Right ventricle myocardium superior (tissue), 1 donor: ENCODE measurements at regions of chr11 and their contacts with region 1.

Region 1: GRCh38 chr11:78564490-78565467 is 9.9 kb downstream of the NARS2 start:
- DNase-seq: no peak
- ATAC-seq: peak; percentile 72

Region 2: DNA sequence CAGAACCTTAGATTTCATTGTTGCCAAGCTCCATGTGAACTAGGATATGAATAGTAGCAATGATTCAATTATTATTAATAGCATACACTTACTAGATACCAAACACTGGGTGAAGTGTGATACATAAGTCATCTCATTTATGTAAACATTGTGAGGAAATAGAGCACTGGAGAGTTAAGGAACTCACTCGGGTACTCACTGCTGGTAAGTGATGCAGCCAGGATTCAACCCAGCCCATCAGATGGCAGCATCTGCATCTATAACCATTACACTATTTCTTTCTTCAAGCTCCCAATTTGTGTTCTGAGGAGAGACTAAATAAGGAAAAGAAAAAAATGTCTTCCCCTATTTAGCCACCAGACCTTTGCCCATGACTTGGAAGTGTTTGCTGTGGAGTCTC is 415.1 kb before region 1 on chr11:
- intact Hi-C with region 1: loop called (anchors 10 kb)
- DNase-seq: no peak
- ATAC-seq: peak; percentile 74

Region 3: DNA sequence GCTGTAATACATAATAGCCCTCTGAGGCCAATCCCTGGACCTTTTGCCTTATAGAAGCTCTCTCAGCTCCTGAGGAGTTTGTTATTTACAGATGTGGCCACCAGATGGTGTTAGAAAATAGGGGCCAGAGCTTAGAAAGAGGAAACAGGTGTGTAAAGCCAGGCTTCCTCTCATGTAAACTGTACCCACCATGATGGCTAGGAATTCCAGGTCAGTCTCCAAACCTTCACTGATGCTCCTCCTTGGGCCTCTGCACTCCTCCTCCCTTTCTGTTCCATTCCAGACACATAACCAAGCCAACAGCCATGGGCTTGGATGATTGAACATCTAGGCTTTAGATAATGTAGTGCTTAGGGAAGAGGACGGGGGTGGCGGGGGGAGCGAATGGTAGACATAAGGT is 336.3 kb before region 1 on chr11:
- intact Hi-C with region 1: loop called (anchors 2 kb)
- DNase-seq: no peak
- ATAC-seq: peak; percentile 69